ENCODE measurements at regions of chrX and their contacts with region 1.

Region 1: GRCh38 chrX:150365051-150365989 is 2.2 kb downstream of the MAMLD1 start:
- DNase-seq: peak; percentile 78
- H3K4me3 ChIP-seq: peak overlapping the region; percentile 46 to 58; a peak in 3 of 4 replicates
- H3K27ac ChIP-seq: peak overlapping the region in 1 of 2 experiments; percentile 65; a peak in 2 of 4 replicates
- H3K4me1 ChIP-seq: peaks cover 0 to 16% of the 10 kb centered on the region in 2 experiments; a peak in 1 of 4 replicates
- H3K27me3 ChIP-seq: no peaks in the 10 kb centered on the region; the same call in 1 of the 2 replicates
- CTCF ChIP-seq: peak; percentile 52
- EP300 ChIP-seq: no peak
- RAD21 ChIP-seq: peak; percentile 46

Region 2: GRCh38 chrX:149962859-149963757 is 402.2 kb before region 1 on chrX:
- CTCF ChIA-PET with region 1: interaction called, 18 read pairs
- POLR2A ChIA-PET with region 1: no interaction called
- DNase-seq: peak; percentile 55
- H3K4me3 ChIP-seq: no peak overlapping the region
- H3K27ac ChIP-seq: no peak overlapping the region
- H3K4me1 ChIP-seq: no peaks in the 10 kb centered on the region
- H3K27me3 ChIP-seq: no peaks in the 10 kb centered on the region
- CTCF ChIP-seq: peak; percentile 83
- EP300 ChIP-seq: no peak
- RAD21 ChIP-seq: peak; percentile 90

Region 3: GRCh38 chrX:150119323-150119722 is 246.0 kb before region 1 on chrX:
- CTCF ChIA-PET with region 1: no interaction called
- POLR2A ChIA-PET with region 1: no interaction called
- DNase-seq: no peak
- H3K4me3 ChIP-seq: no peak overlapping the region
- H3K27ac ChIP-seq: no peak overlapping the region
- H3K4me1 ChIP-seq: no peaks in the 10 kb centered on the region
- H3K27me3 ChIP-seq: no peaks in the 10 kb centered on the region
- CTCF ChIP-seq: no peak
- EP300 ChIP-seq: no peak
- RAD21 ChIP-seq: no peak

Region 4: GRCh38 chrX:150547375-150548115 is 182.2 kb after region 1 on chrX:
- CTCF ChIA-PET with region 1: no interaction called
- POLR2A ChIA-PET with region 1: no interaction called
- DNase-seq: peak; percentile 35
- H3K4me3 ChIP-seq: no peak overlapping the region
- H3K27ac ChIP-seq: no peak overlapping the region
- H3K4me1 ChIP-seq: no peaks in the 10 kb centered on the region
- H3K27me3 ChIP-seq: no peaks in the 10 kb centered on the region; the same call in 1 of the 2 replicates
- CTCF ChIP-seq: no peak
- EP300 ChIP-seq: no peak
- RAD21 ChIP-seq: no peak